ENCODE measurements at regions of chr11 and their contacts with region 1.

Region 1: DNA sequence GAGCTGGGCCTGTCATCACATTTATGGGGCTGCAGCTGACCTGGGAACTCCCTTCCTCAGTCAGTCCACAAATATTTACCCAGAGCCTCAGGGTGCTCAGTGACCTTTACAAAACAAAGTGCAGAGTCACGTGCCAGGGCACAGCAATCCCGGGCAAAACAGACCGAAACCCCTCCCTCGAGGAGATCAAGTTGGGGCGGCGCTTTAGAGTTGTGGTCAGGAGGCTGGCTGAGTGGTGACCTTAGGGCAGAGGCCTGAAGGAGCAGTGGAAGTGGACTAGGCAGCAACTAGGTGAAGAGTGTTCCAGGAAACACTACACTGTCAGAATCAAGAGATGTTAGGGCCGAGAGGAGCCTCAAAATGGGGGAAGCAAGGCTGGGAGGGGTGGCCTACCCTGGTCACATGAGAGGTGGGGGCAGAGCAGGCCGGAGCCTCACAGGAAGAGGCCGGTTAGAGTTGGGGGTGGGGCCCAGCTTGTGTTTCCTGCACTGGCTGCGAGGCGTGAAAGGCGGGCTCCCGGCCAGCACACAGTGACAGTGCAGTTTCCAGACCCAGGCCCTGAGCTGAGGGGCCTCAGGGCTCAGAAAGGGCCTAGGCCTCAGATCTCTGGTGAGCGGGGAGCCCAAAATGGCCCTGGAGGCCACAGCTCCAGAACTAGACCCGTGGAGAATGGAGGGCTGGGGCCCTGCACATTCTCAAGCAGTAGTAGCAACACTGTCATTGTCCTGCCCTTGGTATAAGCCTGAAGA is 3.7 kb upstream of the NEAT1 start:
- DNase-seq: peak; percentile 85 to 99 (median 89)
- ATAC-seq: peak; percentile 57
- H3K4me3 ChIP-seq: peak overlapping the region; percentile 43
- H3K27ac ChIP-seq: peak overlapping the region; percentile 98
- H3K4me1 ChIP-seq: peaks cover 51 to 75% of the 10 kb centered on the region in 2 experiments
- H3K27me3 ChIP-seq: no peaks in the 10 kb centered on the region
- CTCF ChIP-seq: no peak
- EP300 ChIP-seq: peak; percentile 70
- POLR2A ChIP-seq: peak; percentile 90
- RAD21 ChIP-seq: peak in 1 of 2 experiments; percentile 28; a peak in 1 of 4 replicates

Region 2: DNA sequence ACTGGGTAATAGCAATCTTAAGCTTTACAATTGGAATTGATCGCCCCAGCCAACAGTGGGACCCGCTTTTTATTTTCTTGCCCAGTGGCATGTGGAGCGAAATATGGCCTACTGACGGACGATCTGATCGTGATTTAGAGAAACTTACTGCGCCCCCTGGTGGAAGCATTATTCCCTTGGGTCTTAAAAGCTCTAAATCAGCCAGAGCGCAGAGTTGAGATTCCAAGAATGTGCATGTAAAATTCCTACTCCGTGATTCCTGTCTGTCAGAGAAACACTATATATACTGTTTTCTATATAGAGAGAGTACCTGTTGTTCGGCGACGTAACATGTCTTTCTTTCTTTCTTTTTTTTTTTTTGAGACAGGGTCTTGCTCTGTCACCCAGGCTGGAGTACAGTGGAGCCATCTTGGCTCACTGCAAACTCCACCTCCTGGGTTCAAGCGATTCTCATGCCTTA is 88.9 kb before region 1 on chr11:
- CTCF ChIA-PET with region 1: no interaction called
- POLR2A ChIA-PET with region 1: interaction called, 37 read pairs
- in situ Hi-C with region 1: no loop called
- intact Hi-C with region 1: no loop called
- DNase-seq: peak; percentile 52 to 96 (median 64)
- ATAC-seq: peak; percentile 65
- H3K4me3 ChIP-seq: no peak overlapping the region
- H3K27ac ChIP-seq: no peak overlapping the region; the same call in 1 of the 3 replicates
- H3K4me1 ChIP-seq: peaks cover 10 to 11% of the 10 kb centered on the region in 2 experiments; a peak in 4 of 5 replicates
- H3K27me3 ChIP-seq: no peaks in the 10 kb centered on the region
- CTCF ChIP-seq: peak; percentile 78 to 82 (median 80)
- EP300 ChIP-seq: no peak
- POLR2A ChIP-seq: no peak
- RAD21 ChIP-seq: peak; percentile 55 to 74

Region 3: GRCh38 chr11:65403607-65404121 is 15.2 kb before region 1 on chr11:
- CTCF ChIA-PET with region 1: no interaction called
- POLR2A ChIA-PET with region 1: interaction called, 185 read pairs
- in situ Hi-C with region 1: no loop called
- intact Hi-C with region 1: no loop called
- DNase-seq: peak in 1 of 4 experiments; percentile 57
- ATAC-seq: peak; percentile 76
- H3K4me3 ChIP-seq: no peak overlapping the region
- H3K27ac ChIP-seq: peak overlapping the region; percentile 33; the same call in 2 of the 3 replicates
- H3K4me1 ChIP-seq: peaks cover 9 to 49% of the 10 kb centered on the region in 2 experiments
- H3K27me3 ChIP-seq: no peaks in the 10 kb centered on the region
- CTCF ChIP-seq: no peak
- EP300 ChIP-seq: no peak
- POLR2A ChIP-seq: no peak
- RAD21 ChIP-seq: no peak

Region 4: GRCh38 chr11:65454696-65455456 is 36.0 kb after region 1 on chr11:
- CTCF ChIA-PET with region 1: no interaction called
- POLR2A ChIA-PET with region 1: interaction called, 93 read pairs
- in situ Hi-C with region 1: no loop called
- intact Hi-C with region 1: no loop called
- DNase-seq: peak; percentile 97 to 99 (median 98)
- ATAC-seq: peak; percentile 88
- H3K4me3 ChIP-seq: peak overlapping the region; percentile 70
- H3K27ac ChIP-seq: peak overlapping the region; percentile 87
- H3K4me1 ChIP-seq: peaks cover 21 to 38% of the 10 kb centered on the region in 2 experiments; a peak in 4 of 5 replicates
- H3K27me3 ChIP-seq: no peaks in the 10 kb centered on the region
- CTCF ChIP-seq: peak; percentile 35 to 55 (median 50); a peak in 5 of 6 replicates
- EP300 ChIP-seq: no peak
- POLR2A ChIP-seq: peak; percentile 98
- RAD21 ChIP-seq: no peak

Region 5: DNA sequence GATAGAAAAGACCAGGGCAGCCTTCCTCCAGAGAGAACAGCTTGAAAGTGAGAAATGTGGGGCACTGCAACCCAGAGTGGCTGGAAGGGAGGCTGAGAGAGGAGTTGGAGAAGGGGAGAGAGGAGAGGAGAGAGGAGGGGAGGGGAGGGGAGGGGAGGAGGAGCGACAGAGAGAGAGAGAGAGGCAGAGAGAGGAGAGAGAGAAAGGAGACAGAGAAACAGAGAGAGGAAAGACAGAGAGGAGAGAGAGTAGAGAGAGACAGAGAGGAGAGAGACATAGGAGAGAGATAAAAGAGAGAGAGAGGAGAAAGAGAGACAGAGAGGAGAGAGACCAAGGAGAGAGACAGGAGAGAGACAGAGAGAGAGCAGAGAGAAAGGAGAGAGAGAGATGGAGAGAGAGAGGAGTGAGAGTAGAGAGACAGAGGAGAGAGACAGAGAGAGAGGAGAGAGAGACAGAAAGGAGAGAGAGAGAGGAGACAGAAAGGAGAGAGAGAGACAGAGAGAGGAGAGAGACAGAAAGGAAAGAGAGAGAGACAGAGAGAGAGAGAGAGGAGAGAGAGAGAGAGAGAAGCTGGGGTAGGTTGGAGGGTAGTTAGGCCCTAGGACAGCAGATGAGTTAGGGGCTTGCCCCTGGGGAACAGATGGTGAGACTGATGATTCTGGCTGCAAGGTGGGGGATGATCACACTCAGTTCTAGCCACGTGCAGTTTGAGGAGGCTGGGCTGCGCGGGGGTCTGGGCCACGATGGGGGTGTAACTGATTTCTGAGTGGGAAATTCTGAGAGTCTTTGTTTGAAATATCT is 97.5 kb after region 1 on chr11:
- CTCF ChIA-PET with region 1: interaction called, 21 read pairs
- POLR2A ChIA-PET with region 1: interaction called, 1,349 read pairs
- in situ Hi-C with region 1: loop called (anchors 5 kb)
- intact Hi-C with region 1: no loop called
- DNase-seq: no peak
- ATAC-seq: peak; percentile 62
- H3K4me3 ChIP-seq: no peak overlapping the region
- H3K27ac ChIP-seq: no peak overlapping the region
- H3K4me1 ChIP-seq: peaks cover 0 to 12% of the 10 kb centered on the region in 2 experiments; a peak in 2 of 5 replicates
- H3K27me3 ChIP-seq: no peaks in the 10 kb centered on the region
- CTCF ChIP-seq: no peak
- EP300 ChIP-seq: no peak
- POLR2A ChIP-seq: no peak
- RAD21 ChIP-seq: no peak

Region 6: DNA sequence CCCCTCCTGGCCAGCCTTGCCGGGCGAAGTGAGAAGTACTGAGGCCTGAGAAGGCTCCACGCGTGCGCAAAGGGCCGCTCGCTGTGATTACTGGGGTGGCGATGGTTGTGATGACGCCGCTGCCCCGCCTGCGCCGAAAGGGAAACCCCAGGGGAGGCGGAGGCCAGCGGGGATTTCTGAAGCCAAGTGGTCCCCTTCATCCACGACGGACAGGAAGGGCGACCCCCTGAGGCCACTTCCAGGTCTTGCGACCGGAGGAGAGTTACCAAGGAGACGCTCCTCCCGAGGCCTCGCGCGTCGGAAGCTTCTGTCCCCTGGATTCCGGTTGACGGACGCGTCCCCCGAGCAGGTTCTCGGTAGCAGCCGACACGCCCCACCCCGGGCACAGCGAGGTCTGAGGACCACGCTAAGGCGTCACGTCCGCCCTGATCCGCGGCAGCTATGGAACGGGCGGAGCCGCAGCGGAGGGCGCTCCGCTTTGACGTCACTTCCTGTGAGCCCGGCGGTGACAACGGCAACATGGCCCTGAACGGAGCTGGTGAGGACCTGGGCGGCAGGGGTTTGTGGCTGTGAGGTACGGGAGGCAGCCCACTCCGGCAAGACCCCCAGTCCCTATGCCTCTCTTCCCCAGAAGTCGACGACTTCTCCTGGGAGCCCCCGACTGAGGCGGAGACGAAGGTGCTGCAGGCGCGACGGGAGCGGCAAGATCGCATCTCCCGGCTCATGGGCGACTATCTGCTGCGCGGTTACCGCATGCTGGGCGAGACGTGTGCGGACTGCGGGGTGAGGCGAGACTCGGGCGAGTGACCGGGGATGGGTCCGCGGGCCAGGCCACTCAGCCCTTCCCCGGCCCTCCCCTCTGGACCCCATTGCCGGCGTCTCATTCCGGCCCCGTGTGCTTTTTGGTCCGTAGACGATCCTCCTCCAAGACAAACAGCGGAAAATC is 151.4 kb after region 1 on chr11 and contains the start of gene ZNRD2:
- CTCF ChIA-PET with region 1: no interaction called
- POLR2A ChIA-PET with region 1: interaction called, 25 read pairs
- in situ Hi-C with region 1: no loop called
- intact Hi-C with region 1: no loop called
- DNase-seq: peak; percentile 88 to 99 (median 92)
- ATAC-seq: peak; percentile 82
- H3K4me3 ChIP-seq: peak within 1 kb of the TSS; percentile 65
- H3K27ac ChIP-seq: peak within 1 kb of the TSS; percentile 68
- H3K4me1 ChIP-seq: peaks cover 39 to 63% of the 10 kb centered on the region in 2 experiments
- H3K27me3 ChIP-seq: no peaks in the 10 kb centered on the region
- CTCF ChIP-seq: peak; percentile 77 to 86 (median 81)
- EP300 ChIP-seq: no peak
- POLR2A ChIP-seq: peak; percentile 85
- RAD21 ChIP-seq: peak; percentile 51 to 75
- polyA plus RNA-seq, gene ZNRD2: 35.6 to 66.3 TPM